BJ (cell line): ENCODE measurements at regions of chr3 and their contacts with region 1.

Region 1: DNA sequence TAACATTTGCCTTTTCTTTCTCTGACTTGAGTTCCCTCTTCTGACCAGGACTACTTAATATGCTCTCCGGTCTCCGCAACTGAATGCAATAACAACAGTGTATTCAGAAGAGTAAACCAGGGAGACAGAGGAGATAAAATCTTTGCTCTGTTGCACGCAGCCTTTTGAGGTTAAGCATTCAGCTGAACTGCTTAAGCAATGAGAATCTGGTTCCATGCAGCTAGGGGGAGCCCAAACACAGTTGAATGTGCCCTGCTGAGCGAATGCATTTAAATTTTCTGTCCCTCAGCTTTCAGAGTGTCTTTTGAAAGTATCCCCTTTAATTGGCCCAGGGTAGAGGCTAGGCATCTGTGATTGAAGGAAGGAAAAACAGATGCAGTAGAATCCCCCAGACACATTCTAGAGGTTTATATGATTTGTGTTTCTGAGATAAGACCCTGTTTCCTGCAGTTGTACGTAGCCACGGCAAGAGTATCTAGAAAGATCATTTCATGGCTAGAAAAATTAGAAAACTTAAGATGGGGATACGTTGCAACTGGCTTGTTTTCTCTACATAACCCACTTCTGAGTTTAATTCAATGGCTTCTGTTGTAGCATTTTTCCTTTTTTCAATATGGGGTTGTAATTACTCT is 309.6 kb downstream of the TUSC7 start:
- DNase-seq: peak; percentile 33
- H3K4me3 ChIP-seq: no peak overlapping the region
- H3K27me3 ChIP-seq: no peaks in the 10 kb centered on the region
- CTCF ChIP-seq: peak; percentile 85

Region 2: DNA sequence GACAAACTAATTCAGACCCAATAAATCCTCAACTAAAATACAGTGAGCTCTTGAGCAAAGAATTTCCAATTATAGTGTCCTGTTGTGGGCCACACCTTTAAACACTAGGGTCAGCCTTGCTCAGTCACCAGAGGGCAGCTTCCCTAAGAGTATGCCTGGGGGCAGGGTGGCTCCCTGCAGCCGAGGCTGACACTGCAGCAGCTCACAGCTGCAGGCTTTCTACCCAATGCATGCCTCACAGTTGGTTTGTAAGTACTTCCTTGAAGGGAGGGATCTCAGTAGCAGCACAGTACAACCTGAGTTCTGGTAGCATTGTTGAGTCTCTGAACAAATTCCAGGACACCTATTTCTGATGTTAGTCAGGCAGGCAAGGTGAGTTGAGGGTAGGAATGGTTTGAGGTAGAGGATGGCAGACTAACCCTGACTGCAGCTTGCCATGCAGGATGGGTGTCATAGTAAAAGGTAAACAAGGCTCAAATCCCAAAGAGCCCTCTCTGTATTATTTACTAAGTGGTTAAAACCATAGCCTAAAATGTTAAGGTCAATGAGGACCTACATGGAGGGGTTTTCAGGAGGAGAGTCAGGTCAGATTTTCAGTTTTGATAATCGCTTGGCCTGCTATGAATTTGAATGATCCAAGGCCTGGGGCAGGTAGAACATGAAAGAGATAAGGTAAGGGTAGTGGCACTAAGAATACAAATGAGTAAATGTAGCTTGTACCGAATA is 26.1 kb after region 1 on chr3:
- CTCF ChIA-PET with region 1: no interaction called
- POLR2A ChIA-PET with region 1: no interaction called
- DNase-seq: no peak
- H3K4me3 ChIP-seq: no peak overlapping the region
- H3K27me3 ChIP-seq: no peaks in the 10 kb centered on the region
- CTCF ChIP-seq: no peak

Region 3: GRCh38 chr3:117193390-117193789 is 174.2 kb after region 1 on chr3:
- CTCF ChIA-PET with region 1: interaction called, 13 read pairs
- POLR2A ChIA-PET with region 1: no interaction called
- DNase-seq: no peak
- H3K4me3 ChIP-seq: no peak overlapping the region
- H3K27me3 ChIP-seq: no peaks in the 10 kb centered on the region
- CTCF ChIP-seq: peak; percentile 54

Region 4: DNA sequence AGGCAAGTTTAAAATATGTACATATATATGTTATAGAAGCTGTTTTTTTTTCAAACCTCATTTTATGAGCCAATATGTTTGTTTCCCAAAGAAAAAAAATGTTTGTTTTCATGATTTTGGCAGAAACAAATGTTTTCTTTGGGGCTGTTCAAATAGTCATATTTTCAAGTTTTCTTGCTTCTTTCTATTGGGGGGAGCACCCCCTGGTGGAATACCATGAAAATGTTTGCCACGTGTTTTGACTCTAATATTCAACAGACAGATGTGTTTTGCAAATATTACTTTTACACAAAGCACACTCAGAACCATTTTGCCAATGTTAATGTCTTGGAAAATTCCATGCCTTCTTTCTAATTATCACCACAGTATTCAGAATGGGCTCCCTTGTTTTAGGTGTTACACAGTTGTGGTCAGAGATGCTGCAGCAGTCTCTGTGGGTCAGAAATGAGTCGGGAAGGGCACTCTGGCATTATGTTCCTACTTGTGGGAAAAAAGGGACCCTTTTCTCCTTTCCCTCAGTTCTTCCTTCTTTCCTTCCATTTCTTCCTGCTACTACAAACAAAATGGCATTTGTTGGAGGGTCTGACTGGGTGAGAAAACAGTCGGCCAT is 507.4 kb after region 1 on chr3:
- CTCF ChIA-PET with region 1: interaction called, 21 read pairs
- POLR2A ChIA-PET with region 1: no interaction called
- DNase-seq: no peak
- H3K4me3 ChIP-seq: no peak overlapping the region
- H3K27me3 ChIP-seq: no peaks in the 10 kb centered on the region
- CTCF ChIP-seq: peak; percentile 70

Region 5: GRCh38 chr3:117719316-117719926 is 700.2 kb after region 1 on chr3:
- CTCF ChIA-PET with region 1: interaction called, 17 read pairs
- POLR2A ChIA-PET with region 1: no interaction called
- DNase-seq: no peak
- H3K4me3 ChIP-seq: no peak overlapping the region
- H3K27me3 ChIP-seq: no peaks in the 10 kb centered on the region
- CTCF ChIP-seq: peak; percentile 80